ENCODE measurements at regions of chr17 and their contacts with region 1.

Region 1: DNA sequence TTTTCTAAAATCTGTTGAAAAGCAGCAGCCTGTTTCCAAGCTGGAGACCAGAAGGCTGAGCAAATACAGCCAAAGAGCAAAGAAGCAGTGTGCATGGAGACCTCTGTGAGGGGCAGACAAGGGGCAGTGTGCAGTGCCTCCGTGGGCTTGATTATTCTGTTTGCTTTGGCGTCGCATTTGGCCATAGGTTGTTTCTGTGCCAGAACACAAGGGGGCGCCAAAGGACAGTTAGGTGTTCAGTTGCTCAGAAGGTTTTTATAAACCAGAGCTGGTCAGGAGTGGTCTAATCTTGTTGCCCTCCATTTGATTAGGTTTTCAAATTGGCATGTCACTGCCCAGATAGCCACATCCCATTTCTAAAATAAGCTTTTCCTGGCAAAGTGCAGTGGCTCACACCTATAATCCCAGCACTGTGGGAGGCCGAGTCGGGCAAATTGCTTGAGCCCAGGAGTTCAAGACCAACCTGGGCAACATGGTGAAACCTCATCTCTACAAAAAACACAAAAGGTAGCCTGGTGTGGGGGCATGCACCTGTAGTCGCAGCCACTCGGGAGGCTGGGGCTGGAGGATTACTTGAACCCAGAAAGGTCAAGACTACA is 10.6 kb downstream of the MYH3 start:
- DNase-seq: peak; percentile 53 to 86 (median 75)
- ATAC-seq: peak; percentile 40
- H3K4me3 ChIP-seq: no peak overlapping the region
- H3K4me3 Mint-ChIP-seq: no peak overlapping the region
- H3K27ac ChIP-seq: no peak overlapping the region
- H3K27ac Mint-ChIP-seq: no peak overlapping the region
- H3K4me1 ChIP-seq: no peaks in the 10 kb centered on the region
- H3K4me1 Mint-ChIP-seq: peaks cover 3% of the 10 kb centered on the region
- H3K27me3 ChIP-seq: no peaks in the 10 kb centered on the region
- H3K27me3 Mint-ChIP-seq: no peaks in the 10 kb centered on the region
- CTCF ChIP-seq: peak; percentile 89

Region 2: DNA sequence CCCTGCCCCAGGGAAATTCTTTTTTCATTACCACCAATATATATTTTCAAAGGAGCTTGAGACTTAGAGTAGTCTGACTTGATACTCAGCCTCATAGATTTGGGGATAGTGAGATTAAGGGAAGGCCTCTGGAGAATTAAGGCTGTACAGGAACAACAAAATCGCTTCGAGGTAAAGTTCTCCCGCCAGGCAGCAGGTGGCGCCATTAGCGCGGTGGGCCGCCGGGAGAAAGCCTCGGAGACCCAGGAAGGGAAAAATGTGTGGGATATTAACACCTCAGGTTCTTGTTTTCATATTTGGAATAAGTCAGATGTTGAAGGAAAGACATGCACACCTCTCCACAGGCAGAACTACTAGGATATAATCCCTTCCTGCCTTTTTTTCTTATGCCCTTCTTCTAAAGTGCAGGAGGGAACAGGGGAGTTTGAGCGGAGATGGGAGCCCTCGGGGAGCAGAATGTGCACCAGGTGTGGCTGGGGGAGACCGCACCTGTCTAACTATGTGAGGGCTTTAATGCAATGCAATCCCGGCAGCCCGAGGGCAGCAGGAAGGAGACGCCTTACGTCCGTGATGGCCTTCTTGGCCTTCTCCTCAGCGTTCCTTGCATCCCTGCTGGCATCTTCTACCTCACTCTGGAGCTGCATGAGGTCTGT is 15.3 kb before region 1 on chr17:
- CTCF ChIA-PET with region 1: interaction called, 54 read pairs
- POLR2A ChIA-PET with region 1: no interaction called
- intact Hi-C with region 1: no loop called
- DNase-seq: peak in 4 of 9 experiments; percentile 16 to 31 (median 26)
- ATAC-seq: no peak
- H3K4me3 ChIP-seq: no peak overlapping the region
- H3K4me3 Mint-ChIP-seq: no peak overlapping the region
- H3K27ac ChIP-seq: no peak overlapping the region
- H3K27ac Mint-ChIP-seq: no peak overlapping the region
- H3K4me1 ChIP-seq: no peaks in the 10 kb centered on the region
- H3K4me1 Mint-ChIP-seq: no peaks in the 10 kb centered on the region
- H3K27me3 ChIP-seq: no peaks in the 10 kb centered on the region
- H3K27me3 Mint-ChIP-seq: no peaks in the 10 kb centered on the region
- CTCF ChIP-seq: peak; percentile 80

Region 3: GRCh38 chr17:10664571-10664970 is 18.1 kb after region 1 on chr17:
- CTCF ChIA-PET with region 1: interaction called, 18 read pairs
- POLR2A ChIA-PET with region 1: no interaction called
- intact Hi-C with region 1: no loop called
- DNase-seq: no peak
- ATAC-seq: no peak
- H3K4me3 ChIP-seq: no peak overlapping the region
- H3K4me3 Mint-ChIP-seq: no peak overlapping the region
- H3K27ac ChIP-seq: no peak overlapping the region
- H3K27ac Mint-ChIP-seq: no peak overlapping the region
- H3K4me1 ChIP-seq: no peaks in the 10 kb centered on the region
- H3K4me1 Mint-ChIP-seq: no peaks in the 10 kb centered on the region
- H3K27me3 ChIP-seq: no peaks in the 10 kb centered on the region
- H3K27me3 Mint-ChIP-seq: no peaks in the 10 kb centered on the region
- CTCF ChIP-seq: no peak

Region 4: GRCh38 chr17:10683853-10684252 is 37.4 kb after region 1 on chr17:
- CTCF ChIA-PET with region 1: interaction called, 11 read pairs
- POLR2A ChIA-PET with region 1: no interaction called
- intact Hi-C with region 1: no loop called
- DNase-seq: peak in 2 of 9 experiments; percentile 17 to 33
- ATAC-seq: no peak
- H3K4me3 ChIP-seq: no peak overlapping the region
- H3K4me3 Mint-ChIP-seq: no peak overlapping the region
- H3K27ac ChIP-seq: no peak overlapping the region
- H3K27ac Mint-ChIP-seq: no peak overlapping the region
- H3K4me1 ChIP-seq: no peaks in the 10 kb centered on the region
- H3K4me1 Mint-ChIP-seq: peaks cover 6% of the 10 kb centered on the region
- H3K27me3 ChIP-seq: no peaks in the 10 kb centered on the region
- H3K27me3 Mint-ChIP-seq: no peaks in the 10 kb centered on the region
- CTCF ChIP-seq: peak; percentile 53

Region 5: GRCh38 chr17:10748531-10749163 is 102.2 kb after region 1 on chr17:
- CTCF ChIA-PET with region 1: interaction called, 13 read pairs
- POLR2A ChIA-PET with region 1: no interaction called
- intact Hi-C with region 1: no loop called
- DNase-seq: no peak
- ATAC-seq: no peak
- H3K4me3 ChIP-seq: no peak overlapping the region
- H3K4me3 Mint-ChIP-seq: no peak overlapping the region
- H3K27ac ChIP-seq: no peak overlapping the region
- H3K27ac Mint-ChIP-seq: no peak overlapping the region
- H3K4me1 ChIP-seq: peaks cover 17% of the 10 kb centered on the region
- H3K4me1 Mint-ChIP-seq: peaks cover 18% of the 10 kb centered on the region
- H3K27me3 ChIP-seq: peaks cover 0 to 2% of the 10 kb centered on the region in 2 experiments
- H3K27me3 Mint-ChIP-seq: peaks cover 2% of the 10 kb centered on the region
- CTCF ChIP-seq: no peak

Region 6: DNA sequence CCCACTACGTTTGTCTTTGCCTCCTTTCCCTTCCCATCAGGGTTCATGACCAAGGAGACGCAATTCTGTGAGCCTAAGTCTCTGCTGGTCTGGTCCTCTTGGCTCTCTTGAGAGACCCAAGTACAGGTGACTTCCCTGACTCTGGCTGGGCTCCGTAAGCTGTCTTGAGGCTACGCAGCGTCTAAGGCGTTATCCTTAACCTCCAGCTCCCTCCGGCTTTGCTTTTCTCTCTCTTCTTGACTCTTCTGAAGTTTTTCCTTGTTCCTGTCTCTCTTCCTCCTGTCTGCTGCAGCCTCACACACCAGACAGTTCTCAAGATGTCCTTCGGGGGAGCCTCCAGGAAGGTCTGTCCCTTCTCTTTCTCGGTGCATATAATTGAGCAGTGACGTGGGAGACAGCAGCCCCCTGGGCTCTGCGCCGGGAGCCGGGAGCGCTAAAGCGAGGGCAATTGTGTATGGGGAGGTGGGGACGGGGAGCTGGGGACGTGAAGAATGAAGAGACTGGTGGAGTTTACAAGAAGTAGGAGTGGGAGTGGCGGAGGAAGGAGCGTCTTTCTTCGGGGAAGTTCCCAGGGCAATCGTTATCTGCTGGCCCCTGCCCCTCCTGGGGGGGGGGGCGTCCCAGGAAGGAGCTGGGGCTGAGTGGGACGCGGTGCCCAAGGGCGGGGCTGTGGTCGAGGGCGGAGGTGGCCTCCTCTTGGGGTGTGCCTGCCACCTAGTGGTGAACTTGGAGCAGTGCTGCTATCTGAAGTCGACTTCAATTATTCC is 198.3 kb after region 1 on chr17:
- CTCF ChIA-PET with region 1: interaction called, 133 read pairs
- POLR2A ChIA-PET with region 1: interaction called, 3 read pairs
- intact Hi-C with region 1: loop called in 1 of 2 experiments (anchors 1 kb)
- DNase-seq: peak; percentile 24 to 82 (median 69)
- ATAC-seq: peak; percentile 96
- H3K4me3 ChIP-seq: peak overlapping the region; percentile 25 to 59
- H3K4me3 Mint-ChIP-seq: peak overlapping the region; percentile 81
- H3K27ac ChIP-seq: no peak overlapping the region
- H3K27ac Mint-ChIP-seq: no peak overlapping the region
- H3K4me1 ChIP-seq: peaks cover 5% of the 10 kb centered on the region
- H3K4me1 Mint-ChIP-seq: peaks cover 11% of the 10 kb centered on the region
- H3K27me3 ChIP-seq: peaks cover 0 to 4% of the 10 kb centered on the region in 2 experiments
- H3K27me3 Mint-ChIP-seq: peaks cover 5% of the 10 kb centered on the region
- CTCF ChIP-seq: peak; percentile 97

Region 7: DNA sequence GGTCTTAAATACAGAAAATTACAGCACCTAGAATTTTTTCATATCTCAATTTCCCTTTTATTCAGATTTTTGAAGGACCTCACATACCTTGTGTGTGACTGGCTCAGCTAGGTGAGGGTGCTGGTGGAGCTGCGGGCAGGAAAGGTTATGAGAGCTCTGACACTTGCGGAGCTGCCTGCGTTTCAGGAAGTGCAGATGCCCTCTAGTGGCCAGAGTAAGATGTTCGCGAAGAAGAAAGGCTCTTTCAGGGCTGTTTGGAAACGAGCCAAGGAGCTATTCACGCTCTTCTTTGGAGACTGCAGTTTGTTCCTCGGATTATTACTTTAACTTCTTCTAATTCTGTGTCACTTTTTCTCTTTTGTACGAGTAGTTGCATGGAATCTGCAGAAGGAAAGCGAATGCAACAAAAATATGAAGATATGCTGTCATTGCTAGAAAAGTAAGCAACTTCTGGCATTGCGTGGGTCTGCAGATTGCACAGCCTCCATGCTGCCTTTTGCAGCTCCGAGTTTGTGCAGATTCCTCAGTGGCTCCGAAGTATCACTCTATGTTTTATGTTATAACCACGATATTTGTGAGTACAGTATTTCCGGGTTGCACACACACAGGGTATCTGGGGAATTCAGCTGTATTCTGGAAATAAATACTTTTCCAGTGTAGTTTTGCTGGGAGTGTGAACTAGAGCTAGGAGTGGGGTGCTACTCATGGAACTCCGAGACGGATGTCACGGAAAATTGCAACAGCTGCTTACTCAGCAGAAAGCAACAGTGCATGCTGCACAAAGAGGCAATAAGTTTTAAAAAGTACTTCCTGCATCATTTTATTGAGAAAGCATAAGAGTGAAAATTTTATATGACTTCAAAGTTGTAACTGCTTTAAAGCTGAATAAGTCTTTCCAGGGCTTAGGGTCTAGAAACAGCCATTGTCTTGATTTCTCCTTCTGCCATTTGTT is 998.0 kb after region 1 on chr17:
- CTCF ChIA-PET with region 1: no interaction called
- POLR2A ChIA-PET with region 1: no interaction called
- intact Hi-C with region 1: loop called in 1 of 2 experiments (anchors 5 kb)
- DNase-seq: peak in 5 of 9 experiments; percentile 18 to 55 (median 26)
- ATAC-seq: no peak
- H3K4me3 ChIP-seq: no peak overlapping the region
- H3K4me3 Mint-ChIP-seq: no peak overlapping the region
- H3K27ac ChIP-seq: no peak overlapping the region
- H3K27ac Mint-ChIP-seq: no peak overlapping the region
- H3K4me1 ChIP-seq: no peaks in the 10 kb centered on the region
- H3K4me1 Mint-ChIP-seq: peaks cover 4% of the 10 kb centered on the region
- H3K27me3 ChIP-seq: no peaks in the 10 kb centered on the region
- H3K27me3 Mint-ChIP-seq: no peaks in the 10 kb centered on the region
- CTCF ChIP-seq: peak; percentile 33

Measured in CD8-positive, alpha-beta T cell (primary cell).